HAP-1 (cell line): ENCODE measurements at regions of chr9 and their contacts with region 1.

Region 1: DNA sequence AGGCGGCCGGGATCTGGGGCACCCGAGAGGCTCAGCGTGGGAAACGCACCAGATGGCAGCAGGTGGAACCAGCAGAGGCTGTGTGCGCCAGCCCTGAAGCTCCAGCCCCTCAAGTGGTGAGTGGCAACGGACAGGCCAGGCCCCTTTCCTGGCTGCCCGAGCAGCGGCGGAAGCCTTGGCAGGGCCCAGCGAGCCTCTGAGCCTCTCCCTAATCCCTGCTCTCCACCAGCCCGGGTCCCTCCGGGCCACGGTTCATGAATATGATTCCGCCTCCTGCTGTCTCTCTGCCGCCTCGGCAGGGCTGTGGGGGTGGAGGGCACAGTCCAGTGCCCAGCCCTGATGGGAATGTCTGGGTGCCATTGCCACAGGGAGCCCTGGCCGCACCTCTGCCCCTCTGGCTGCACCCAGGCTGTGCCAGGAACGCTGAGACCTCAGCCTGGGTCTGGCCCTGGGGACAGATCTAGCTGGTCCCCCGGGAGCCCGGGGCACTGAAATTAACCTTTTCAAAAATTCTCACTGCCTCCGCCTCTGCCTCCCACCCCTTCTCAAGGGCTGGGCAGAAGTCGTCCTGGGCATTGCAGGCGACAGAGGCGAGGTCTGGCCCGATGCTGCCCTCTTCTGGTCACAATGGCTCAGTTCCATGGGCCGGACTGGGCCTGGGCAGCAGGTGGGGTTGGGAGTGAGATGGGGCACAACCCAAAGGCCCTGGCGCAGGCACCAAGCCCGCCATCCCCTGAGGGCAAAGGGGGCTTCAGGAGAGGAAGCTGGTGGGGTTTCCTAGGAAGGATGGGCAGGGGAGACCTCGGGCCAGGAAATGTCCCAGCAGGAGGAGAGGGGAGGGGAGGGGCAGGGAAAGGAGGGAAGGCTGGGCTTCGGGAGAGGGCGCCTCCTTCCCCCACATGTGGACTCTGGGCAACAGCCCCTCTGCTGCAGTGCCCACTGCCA is 20.3 kb downstream of the CCDC187 start:
- DNase-seq: peak; percentile 49 to 88
- H3K4me3 ChIP-seq: no peak overlapping the region
- H3K4me1 ChIP-seq: no peaks in the 10 kb centered on the region
- H3K27me3 ChIP-seq: no peaks in the 10 kb centered on the region

Region 2: DNA sequence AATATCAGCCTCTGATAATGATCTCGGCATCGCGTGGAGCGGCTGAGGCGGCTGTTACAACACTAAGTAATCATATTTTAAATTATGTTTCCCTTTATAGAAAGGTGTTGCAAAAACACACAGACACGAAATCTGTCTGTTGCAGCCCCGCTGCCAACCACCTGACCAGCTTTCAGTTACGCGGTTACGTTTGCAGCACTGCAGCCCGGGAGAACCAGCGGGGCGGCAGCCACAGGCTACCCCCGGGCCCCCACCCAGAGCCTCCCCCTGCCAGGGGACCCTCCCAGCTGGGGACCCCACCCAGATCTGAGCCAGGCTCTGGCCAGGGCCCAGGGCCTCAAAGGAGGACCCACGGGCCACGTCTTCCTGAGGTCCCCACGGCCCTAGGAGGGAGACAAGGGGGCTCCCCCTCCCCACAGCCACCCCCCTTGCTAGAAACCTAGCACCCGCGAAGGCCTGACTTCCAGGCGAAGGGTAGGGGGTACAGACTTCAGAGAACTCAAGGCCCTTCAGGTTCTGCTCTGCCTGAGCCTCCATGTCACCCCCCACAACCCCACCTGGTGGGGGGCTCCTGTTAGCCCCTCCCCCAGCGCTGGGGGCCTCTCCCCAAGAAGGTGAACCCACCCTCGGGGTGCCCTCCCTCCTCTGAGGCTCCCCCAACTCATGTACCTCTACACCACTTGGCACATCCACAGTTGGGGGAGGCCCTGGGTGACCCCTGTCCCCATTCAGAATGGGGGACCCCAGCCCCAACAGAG is 194.4 kb before region 1 on chr9:
- in situ Hi-C with region 1: no loop called
- DNase-seq: peak in 1 of 2 experiments; percentile 13
- H3K4me3 ChIP-seq: no peak overlapping the region
- H3K4me1 ChIP-seq: peaks cover 36% of the 10 kb centered on the region
- H3K27me3 ChIP-seq: no peaks in the 10 kb centered on the region

Region 3: DNA sequence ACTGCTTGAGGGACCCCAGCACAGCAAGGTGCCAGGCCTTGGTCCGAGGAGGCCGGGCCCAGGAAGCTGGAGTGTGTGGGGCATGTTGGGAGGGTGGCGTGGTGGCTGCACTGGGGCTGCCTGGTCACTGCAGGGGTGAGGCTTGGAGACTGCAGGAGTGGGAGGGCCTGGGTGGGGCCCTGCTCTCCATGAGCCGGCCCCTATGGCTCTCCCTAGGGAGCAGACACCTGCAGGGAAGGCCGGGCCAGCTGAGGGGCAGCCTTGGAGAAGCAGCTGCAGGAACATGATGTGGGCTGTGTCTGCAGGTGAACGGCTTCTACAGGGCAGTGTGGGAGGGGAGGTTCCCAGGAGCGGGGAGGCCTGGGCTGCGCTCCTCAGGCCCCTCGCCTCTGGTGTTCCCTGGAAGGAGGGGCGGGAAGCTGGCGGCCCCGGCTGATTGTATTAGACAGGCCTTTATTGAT is 123.2 kb before region 1 on chr9:
- in situ Hi-C with region 1: loop called (anchors 10 kb)
- DNase-seq: no peak
- H3K4me3 ChIP-seq: no peak overlapping the region
- H3K4me1 ChIP-seq: no peaks in the 10 kb centered on the region
- H3K27me3 ChIP-seq: peaks cover 2% of the 10 kb centered on the region; the same call in 1 of the 2 replicates